IMR-90 (cell line): ENCODE measurements at regions of chr19 and their contacts with region 1.

Region 1: GRCh38 chr19:16382775-16383543 is 58.3 kb downstream of the KLF2 start:
- DNase-seq: peak; percentile 85
- ATAC-seq: peak; percentile 92
- H3K4me3 ChIP-seq: no peak overlapping the region
- H3K27ac ChIP-seq: no peak overlapping the region
- H3K4me1 ChIP-seq: peaks cover 2% of the 10 kb centered on the region; the same call in 1 of the 2 replicates
- H3K27me3 ChIP-seq: no peaks in the 10 kb centered on the region
- CTCF ChIP-seq: peak; percentile 88
- POLR2A ChIP-seq: no peak
- RAD21 ChIP-seq: peak; percentile 99

Region 2: DNA sequence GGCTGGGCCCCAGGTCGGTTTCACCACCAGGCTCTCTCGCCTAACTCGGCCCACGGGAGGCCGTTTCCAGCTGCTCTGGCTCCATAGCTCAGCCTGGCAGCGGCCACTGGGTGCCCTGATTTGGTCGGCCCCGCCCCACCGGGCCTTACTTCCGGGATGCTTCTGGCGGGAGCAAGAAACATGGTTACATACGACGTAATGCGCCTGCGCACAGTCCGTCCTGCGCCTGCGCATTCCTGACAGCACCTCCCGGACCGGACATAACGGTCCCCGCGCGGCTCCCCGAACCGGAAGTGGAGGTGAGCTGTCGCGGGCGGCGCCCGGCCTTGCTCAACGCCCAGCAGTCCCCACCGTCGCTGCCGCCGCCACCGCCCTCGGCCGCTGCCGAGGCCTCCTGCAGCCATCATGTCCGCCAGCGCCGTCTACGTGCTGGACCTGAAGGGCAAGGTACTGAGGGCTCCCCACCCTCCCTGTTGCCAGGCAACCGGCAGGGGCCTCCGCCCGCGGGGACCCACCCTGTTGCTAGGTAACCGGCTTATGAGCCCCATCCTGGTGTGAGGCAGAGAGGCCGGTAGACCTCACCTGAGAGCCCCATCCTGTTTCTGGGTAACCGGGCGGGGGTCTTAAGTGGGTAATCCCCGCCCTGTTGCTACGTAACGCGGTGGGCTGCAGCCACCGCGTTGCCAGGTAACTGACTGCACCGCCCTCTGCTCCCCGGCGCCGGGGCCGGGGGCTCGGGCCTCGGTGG is 185.2 kb before region 1 on chr19 and contains the start of gene AP1M1:
- CTCF ChIA-PET with region 1: no interaction called
- POLR2A ChIA-PET with region 1: no interaction called
- dilution Hi-C with region 1: no loop called
- in situ Hi-C with region 1: no loop called
- intact Hi-C with region 1: loop called (anchors 2 kb)
- DNase-seq: peak; percentile 97
- ATAC-seq: peak; percentile 85
- H3K4me3 ChIP-seq: peak within 1 kb of the TSS; percentile 94
- H3K27ac ChIP-seq: peak within 1 kb of the TSS; percentile 97
- H3K4me1 ChIP-seq: peaks cover 11% of the 10 kb centered on the region
- H3K27me3 ChIP-seq: no peaks in the 10 kb centered on the region
- CTCF ChIP-seq: no peak
- POLR2A ChIP-seq: 0 out of 2 replicates have a peak, but pooled peaks have one; percentile 42
- RAD21 ChIP-seq: no peak
- total RNA-seq, gene AP1M1: 85.1 and 85.8 TPM in 2 replicates

Region 3: DNA sequence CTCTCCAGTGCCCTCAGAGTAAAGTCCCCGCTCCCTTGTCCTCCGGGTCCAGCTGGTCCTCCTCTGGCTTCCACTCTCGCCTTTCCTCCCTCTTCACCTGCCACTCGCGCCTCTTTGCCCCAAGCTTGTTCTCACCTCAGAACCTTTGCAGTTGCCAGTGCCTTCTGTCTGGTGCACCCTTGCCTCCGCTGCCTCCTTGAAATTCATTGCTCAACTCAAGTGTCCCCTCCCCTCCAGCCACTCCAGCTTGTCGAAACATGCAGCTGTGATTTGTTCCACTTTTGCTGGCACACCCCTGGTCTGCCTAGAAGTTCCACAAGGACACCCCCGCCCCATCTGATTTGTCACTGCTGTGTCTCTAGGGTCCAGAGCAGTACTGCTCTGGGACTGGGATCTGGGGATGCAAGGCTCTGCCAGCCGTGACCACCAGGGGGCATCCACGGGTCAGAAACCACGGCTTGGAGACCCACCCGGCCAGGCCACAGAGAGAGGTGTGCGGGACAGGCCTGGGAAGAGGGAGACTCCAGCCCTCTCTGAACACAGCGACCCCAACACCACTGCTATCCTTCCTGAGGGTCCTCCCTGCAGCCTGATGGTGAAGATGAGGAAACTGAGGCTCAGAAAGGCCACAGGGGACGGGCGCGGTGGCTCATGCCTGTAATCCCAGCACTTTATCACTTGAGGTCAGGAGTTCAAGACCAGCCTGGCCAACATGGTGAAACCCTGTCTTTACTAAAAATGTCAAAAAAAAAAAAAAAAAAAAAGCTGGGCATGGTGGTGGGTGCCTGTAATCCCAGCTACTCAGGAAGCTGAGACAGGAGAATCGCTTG is 135.4 kb before region 1 on chr19:
- CTCF ChIA-PET with region 1: interaction called, 33 read pairs
- POLR2A ChIA-PET with region 1: no interaction called
- dilution Hi-C with region 1: no loop called
- in situ Hi-C with region 1: loop called (anchors 5 kb)
- intact Hi-C with region 1: loop called (anchors 1 kb)
- DNase-seq: peak; percentile 70
- ATAC-seq: peak; percentile 98
- H3K4me3 ChIP-seq: no peak overlapping the region
- H3K27ac ChIP-seq: no peak overlapping the region
- H3K4me1 ChIP-seq: no peaks in the 10 kb centered on the region; the same call in 1 of the 2 replicates
- H3K27me3 ChIP-seq: no peaks in the 10 kb centered on the region
- CTCF ChIP-seq: peak; percentile 96
- POLR2A ChIP-seq: peak; percentile 44; the same call in 1 of the 2 replicates
- RAD21 ChIP-seq: peak; percentile 97

Region 4: DNA sequence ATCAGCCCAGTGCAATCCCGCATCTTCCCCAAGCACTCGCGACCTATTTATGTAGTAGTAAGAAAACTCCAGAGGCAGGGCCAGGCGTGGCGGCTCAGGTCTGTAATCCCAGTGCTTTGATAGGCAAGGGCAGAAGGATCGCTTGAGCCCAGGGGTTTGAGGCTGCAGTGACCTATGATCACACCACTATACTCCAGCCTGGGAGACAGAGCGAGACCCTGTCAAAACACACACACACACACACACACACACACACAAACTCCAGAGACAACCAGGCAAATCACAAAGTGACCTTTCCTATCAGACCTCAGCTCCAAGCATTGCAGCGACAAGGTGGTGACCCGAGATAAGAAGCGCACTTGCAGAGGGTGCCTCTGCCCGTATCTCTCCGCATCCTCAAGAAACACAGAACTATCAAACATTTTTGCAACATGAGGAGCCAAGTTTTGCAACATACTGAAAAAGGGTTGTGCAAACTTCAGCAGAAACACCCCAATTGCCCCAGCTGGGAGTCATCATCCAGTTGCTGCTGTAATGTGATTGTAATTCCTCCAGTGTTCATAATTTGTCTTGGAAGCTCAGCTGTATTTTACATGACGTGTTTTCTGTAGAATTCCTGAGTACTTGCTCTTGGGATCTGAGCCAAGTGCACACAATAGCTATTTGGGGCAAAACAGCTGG is 67.0 kb before region 1 on chr19:
- CTCF ChIA-PET with region 1: interaction called, 5 read pairs
- POLR2A ChIA-PET with region 1: no interaction called
- dilution Hi-C with region 1: no loop called
- in situ Hi-C with region 1: no loop called
- intact Hi-C with region 1: loop called (anchors 2 kb)
- DNase-seq: peak; percentile 99
- ATAC-seq: peak; percentile 83
- H3K4me3 ChIP-seq: no peak overlapping the region
- H3K27ac ChIP-seq: peak overlapping the region; percentile 66
- H3K4me1 ChIP-seq: peaks cover 12% of the 10 kb centered on the region
- H3K27me3 ChIP-seq: no peaks in the 10 kb centered on the region
- CTCF ChIP-seq: no peak
- POLR2A ChIP-seq: no peak
- RAD21 ChIP-seq: peak; percentile 16; the same call in 1 of the 2 replicates

Region 5: DNA sequence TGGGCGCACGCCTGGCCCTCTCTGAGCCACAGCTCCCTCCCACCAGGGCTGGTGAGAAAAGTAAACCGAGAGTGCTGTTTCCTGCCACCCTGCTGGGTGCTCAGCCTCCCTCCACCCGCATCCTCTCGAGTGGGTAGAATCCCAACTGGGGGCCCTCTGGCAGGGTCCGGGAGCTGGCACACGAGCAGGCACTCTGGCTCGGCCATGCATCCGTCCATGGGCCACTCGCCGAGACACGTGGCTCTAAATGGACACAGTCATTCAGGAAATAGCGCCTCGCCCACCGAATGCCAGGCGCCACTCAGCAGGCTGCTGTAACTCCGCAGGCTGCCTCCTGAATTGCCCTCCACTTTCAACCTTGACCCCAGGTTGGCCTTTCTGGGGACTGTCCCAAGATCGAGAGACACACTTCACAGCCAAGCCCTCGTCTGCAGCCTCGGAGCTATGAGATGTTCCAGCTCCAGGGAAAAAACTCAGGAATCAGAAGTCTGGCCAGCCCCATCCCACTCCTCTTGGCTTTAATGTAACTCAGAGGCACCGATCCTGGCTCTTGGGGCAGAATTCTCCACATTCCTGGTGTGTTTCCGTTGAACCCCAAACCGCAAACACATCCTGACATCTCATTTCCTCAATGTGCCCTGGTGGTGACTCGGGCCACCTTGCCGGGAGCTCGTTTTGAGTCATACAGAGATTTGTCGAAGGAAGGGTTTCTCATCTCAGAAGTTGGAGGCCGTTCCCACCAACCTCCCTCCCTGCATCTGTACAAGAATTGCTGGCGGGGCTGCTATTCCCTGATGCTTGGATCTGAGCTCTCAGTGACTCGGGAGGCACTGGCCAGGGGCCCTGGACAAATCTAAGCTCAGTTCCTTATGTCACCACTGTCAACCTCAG is 44.2 kb before region 1 on chr19:
- CTCF ChIA-PET with region 1: interaction called, 7 read pairs
- POLR2A ChIA-PET with region 1: interaction called, 5 read pairs
- dilution Hi-C with region 1: no loop called
- in situ Hi-C with region 1: no loop called
- intact Hi-C with region 1: loop called (anchors 2 kb)
- DNase-seq: peak; percentile 96
- ATAC-seq: peak; percentile 80
- H3K4me3 ChIP-seq: no peak overlapping the region
- H3K27ac ChIP-seq: peak overlapping the region; percentile 69
- H3K4me1 ChIP-seq: peaks cover 21% of the 10 kb centered on the region
- H3K27me3 ChIP-seq: no peaks in the 10 kb centered on the region
- CTCF ChIP-seq: 0 out of 2 replicates have a peak, but pooled peaks have one; percentile 15
- POLR2A ChIP-seq: no peak
- RAD21 ChIP-seq: peak; percentile 21; the same call in 1 of the 2 replicates